Activated T-helper 2 cell treated with anti-CD3 and anti-CD28 coated beads, Interferon-gamma antibody, Interleukin-2, Interleukin-4, amounts not matched to agents 10 μg/mL and 5 μg/mL and 100 μg/mL, durations not matched to agents 14 hours and 24 hours and 36 hours (primary cell): ENCODE measurements at regions of chr20 and their contacts with region 1.

Region 1: DNA sequence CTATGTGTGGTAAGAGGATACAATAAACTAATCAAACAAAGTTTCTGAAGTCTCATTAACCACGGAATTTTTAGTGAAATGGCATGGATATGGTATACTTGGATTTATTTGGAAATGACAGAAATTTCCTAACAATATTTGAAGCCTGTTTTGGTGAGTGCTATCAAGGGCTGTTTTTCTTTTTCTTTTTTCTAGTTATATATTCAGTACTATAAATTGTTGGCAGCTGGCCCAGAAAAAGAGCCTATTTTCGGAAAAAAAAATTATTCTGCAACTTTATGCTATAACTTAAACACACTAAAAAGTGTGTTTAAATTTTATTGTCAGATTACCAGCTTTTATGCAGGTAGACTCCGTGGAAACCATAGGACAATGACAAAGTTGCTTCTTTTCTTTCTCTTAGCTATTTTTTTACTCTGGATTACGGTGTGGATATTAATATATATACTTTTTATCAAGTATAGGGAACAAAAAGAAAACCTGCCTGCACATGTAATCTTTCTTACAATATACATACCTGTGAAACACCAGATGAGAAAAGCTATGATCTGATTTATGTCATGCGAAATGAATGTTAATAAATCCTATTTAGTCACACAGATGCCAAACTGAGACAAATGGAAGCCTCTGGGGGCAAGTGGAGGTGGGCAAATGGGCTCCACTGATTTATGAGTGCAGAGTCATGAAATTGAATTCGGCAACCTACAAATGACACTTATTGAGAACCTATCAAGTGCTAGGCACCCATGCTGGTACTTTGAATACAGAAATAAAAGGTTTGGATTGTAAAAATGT is 919.5 kb upstream of the FLRT3 start:
- DNase-seq: no peak
- H3K4me3 Mint-ChIP-seq: no peak overlapping the region
- H3K27ac Mint-ChIP-seq: no peak overlapping the region
- H3K4me1 Mint-ChIP-seq: no peaks in the 10 kb centered on the region
- H3K27me3 Mint-ChIP-seq: no peaks in the 10 kb centered on the region

Region 2: DNA sequence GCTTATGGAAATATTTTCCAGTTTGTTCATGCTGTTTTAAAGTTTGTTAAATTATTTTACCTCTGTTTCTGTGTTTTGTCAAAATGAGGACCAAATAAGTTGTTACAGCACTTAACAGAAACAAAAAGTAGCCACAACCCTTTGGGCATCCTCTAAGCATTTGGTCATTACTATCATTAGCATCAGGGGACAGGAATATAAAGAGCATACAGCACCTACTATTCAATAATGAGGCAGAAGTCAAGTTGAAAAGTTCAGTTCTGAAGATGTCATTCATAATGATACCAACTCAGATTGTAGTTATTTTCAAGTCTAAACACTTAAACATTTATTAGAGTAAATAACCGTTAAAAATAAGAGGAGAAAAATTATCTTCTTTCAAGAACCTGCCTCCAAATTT is 57.2 kb before region 1 on chr20:
- intact Hi-C with region 1: loop called (anchors 10 kb)
- DNase-seq: no peak
- H3K4me3 Mint-ChIP-seq: no peak overlapping the region
- H3K27ac Mint-ChIP-seq: no peak overlapping the region
- H3K4me1 Mint-ChIP-seq: no peaks in the 10 kb centered on the region
- H3K27me3 Mint-ChIP-seq: no peaks in the 10 kb centered on the region